ENCODE measurements at regions of chr3 and their contacts with region 1.

Region 1: GRCh38 chr3:172276105-172276504 is 172.2 kb downstream of the GHSR start:
- DNase-seq: no peak
- ATAC-seq: no peak

Region 2: GRCh38 chr3:172309741-172310427 is 33.8 kb after region 1 on chr3:
- intact Hi-C with region 1: loop called (anchors 2 kb)
- DNase-seq: no peak
- ATAC-seq: no peak

Measured in Right ventricle myocardium superior (tissue), 1 donor.